Activated CD4-positive, alpha-beta memory T cell treated with anti-CD3 and anti-CD28 coated beads for 36 hours (primary cell): ENCODE measurements at regions of chr13 and their contacts with region 1.

Region 1: GRCh38 chr13:24512197-24512907 is at the start of gene PARP4:
- DNase-seq: peak; percentile 80
- H3K4me3 Mint-ChIP-seq: peak within 1 kb of the TSS; percentile 76
- H3K27ac Mint-ChIP-seq: peak within 1 kb of the TSS; percentile 94
- H3K4me1 Mint-ChIP-seq: peaks cover 28% of the 10 kb centered on the region
- H3K27me3 Mint-ChIP-seq: no peaks in the 10 kb centered on the region
- total RNA-seq, gene PARP4: 20.7 to 22.2 TPM

Region 2: DNA sequence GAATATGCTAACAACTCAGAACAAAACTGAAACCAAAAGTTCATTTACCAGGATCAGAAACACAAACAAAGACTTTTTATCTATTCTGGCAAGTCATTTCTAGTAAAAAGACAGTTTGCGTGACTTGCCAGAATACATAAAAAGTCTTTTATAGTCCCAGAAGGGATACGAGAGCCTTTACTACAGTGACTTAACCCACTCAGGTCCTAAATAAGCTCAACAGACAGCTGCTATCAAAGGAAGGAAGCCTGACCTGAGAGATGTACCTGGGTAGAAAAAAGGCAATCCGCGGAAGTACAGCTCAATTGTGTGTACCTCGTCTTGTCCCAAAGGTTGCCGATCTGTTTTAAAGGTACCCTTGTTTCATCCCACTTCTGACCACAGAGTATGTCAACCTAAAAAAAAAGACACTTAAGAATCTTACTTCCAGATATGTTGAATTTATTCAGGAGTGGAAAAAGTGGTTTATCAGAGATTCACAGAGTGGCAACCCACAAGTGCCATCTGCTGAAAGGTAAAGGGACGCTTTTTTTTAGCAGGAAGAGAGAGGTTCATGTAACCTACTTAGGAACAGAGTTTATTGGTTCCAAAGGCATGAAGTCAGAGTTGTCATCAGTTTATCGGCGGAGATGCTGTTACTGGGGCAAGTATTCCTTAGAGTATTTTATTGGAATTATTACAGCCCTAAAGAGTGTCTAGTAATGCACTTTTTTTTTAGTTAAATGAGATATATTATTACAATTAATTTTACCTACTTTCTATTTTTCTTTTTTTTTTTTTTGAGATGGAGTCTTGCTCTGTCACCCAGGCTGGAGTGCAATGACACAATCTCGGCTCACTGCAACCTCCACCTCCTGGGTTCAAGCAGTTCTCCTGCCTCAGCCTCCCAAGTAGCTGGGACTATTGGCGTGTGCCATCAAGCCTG is 545.4 kb before region 1 on chr13:
- CTCF ChIA-PET with region 1: no interaction called
- POLR2A ChIA-PET with region 1: no interaction called
- intact Hi-C with region 1: loop called (anchors 1 kb)
- DNase-seq: peak; percentile 31
- H3K4me3 Mint-ChIP-seq: peak overlapping the region; percentile 51
- H3K27ac Mint-ChIP-seq: peak overlapping the region; percentile 83
- H3K4me1 Mint-ChIP-seq: peaks cover 30% of the 10 kb centered on the region
- H3K27me3 Mint-ChIP-seq: no peaks in the 10 kb centered on the region

Region 3: GRCh38 chr13:24020375-24020830 is 491.9 kb before region 1 on chr13:
- CTCF ChIA-PET with region 1: no interaction called
- POLR2A ChIA-PET with region 1: no interaction called
- intact Hi-C with region 1: no loop called
- DNase-seq: peak; percentile 51
- H3K4me3 Mint-ChIP-seq: no peak overlapping the region
- H3K27ac Mint-ChIP-seq: no peak overlapping the region
- H3K4me1 Mint-ChIP-seq: peaks cover 3% of the 10 kb centered on the region
- H3K27me3 Mint-ChIP-seq: no peaks in the 10 kb centered on the region

Region 4: GRCh38 chr13:24254146-24254841 is 258.1 kb before region 1 on chr13:
- CTCF ChIA-PET with region 1: no interaction called
- POLR2A ChIA-PET with region 1: interaction called, 5 read pairs
- intact Hi-C with region 1: loop called (anchors 2 kb)
- DNase-seq: peak; percentile 86
- H3K4me3 Mint-ChIP-seq: peak overlapping the region; percentile 87
- H3K27ac Mint-ChIP-seq: peak overlapping the region; percentile 95
- H3K4me1 Mint-ChIP-seq: peaks cover 73% of the 10 kb centered on the region
- H3K27me3 Mint-ChIP-seq: no peaks in the 10 kb centered on the region

Region 5: DNA sequence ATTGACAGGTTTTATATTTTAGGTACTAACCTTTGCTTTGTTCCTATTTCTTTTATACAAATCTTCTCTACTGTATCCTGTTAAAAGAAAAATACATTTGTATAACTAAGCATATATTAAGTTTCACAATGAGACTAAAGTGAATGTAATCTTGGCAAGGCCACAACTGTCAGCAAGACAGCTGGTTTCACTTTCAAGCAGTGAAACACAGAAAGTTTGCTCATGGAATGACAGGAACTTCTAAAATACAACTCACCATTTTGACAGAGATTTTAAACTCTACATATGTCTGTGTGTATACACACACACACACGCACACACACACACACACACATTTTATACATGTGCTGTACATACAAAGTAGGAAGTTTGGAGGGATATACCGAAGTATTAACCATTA is 53.1 kb before region 1 on chr13:
- CTCF ChIA-PET with region 1: interaction called, 4 read pairs
- POLR2A ChIA-PET with region 1: no interaction called
- intact Hi-C with region 1: loop called (anchors 1 kb)
- DNase-seq: peak; percentile 31
- H3K4me3 Mint-ChIP-seq: no peak overlapping the region
- H3K27ac Mint-ChIP-seq: peak overlapping the region; percentile 2
- H3K4me1 Mint-ChIP-seq: peaks cover 20% of the 10 kb centered on the region
- H3K27me3 Mint-ChIP-seq: no peaks in the 10 kb centered on the region

Region 6: DNA sequence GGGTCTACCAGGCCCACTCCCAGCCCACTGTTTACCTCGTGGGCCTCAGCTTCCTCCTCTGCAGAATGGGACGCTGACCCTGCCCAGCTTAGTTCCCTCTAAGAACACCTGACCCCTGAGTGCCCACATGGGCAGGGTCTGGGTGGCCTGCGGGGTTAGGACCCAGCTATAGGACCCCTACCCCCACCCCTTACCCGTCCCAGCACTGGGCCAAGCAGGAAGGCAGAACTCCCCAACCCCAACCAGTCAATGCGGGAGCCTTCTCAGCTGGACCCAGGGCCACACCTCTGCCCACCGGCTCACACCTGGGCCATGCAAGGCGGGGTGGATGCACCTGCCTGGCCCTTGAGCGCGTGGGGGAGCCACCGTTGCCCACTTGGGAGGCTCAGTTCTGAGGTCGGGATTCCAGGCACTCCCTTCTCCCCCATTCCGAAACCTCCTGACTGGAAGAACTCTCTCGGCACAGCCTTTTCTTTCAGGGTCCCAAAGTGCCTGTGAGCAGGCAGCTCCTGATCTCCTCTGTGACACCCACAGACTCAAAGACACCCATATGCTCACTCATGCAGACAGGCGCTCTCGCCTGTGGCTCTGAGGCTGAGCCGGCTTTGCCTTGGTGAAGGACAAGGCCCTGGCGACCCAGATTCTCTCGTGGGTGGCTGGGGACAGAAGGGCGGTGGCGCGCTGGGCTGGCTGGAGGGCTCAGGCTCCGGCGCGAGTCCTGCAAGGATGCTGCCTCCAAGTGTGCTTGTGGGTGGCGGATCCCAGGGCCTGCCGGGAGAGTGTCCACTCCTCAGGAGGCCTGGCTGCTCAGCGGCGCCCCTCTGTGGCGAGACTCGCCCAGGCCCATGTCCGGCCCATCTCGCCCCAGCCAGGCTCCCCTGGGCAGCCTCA is 28.1 kb after region 1 on chr13:
- CTCF ChIA-PET with region 1: no interaction called
- POLR2A ChIA-PET with region 1: no interaction called
- intact Hi-C with region 1: no loop called
- DNase-seq: peak; percentile 22
- H3K4me3 Mint-ChIP-seq: no peak overlapping the region
- H3K27ac Mint-ChIP-seq: no peak overlapping the region
- H3K4me1 Mint-ChIP-seq: peaks cover 8% of the 10 kb centered on the region
- H3K27me3 Mint-ChIP-seq: peaks cover 33% of the 10 kb centered on the region

Region 7: DNA sequence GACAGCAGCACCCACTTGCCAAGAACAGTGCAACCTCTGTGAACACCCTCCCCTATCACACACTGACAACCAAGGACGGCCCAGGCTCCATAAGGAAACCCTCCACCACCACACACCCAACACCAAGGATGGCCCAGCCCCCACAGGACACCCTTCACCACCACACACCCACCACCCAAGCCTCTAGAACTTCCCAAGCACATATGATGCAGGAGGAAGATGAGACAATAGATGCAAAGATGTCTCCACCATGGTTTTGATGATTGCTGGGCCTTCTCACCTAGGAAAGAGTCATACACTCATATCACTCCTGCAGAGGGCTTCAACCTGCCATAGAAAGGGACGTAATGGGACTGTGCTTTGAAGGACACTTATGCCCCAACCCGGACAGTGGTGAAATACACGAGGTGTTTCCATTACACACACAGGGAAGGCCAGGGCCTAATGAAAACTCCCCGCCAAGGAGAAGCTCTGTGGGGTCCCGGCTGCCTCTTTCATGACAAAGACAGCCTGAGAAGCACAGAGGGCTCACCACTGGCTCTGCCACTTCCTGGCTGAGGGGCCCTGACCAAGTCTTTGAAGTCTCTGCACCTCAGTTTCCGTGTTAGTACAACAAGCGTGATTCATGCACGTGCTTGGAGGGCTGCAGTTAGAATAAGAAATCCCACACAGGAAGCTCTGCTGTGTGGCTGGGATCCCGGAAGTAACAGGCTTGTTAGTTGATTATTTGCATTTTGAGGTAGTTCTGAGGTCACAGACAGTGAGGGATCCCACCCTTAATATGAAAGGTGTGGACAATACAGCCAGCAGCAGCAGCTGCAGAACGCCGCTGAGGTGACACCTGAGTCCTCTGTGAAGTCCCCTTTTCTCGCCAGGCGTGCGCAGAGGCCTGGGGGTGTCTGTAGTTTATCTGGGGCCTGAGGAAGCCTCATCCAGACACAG is 105.9 kb after region 1 on chr13:
- CTCF ChIA-PET with region 1: no interaction called
- POLR2A ChIA-PET with region 1: no interaction called
- intact Hi-C with region 1: loop called (anchors 5 kb)
- DNase-seq: peak; percentile 87
- H3K4me3 Mint-ChIP-seq: peak overlapping the region; percentile 23
- H3K27ac Mint-ChIP-seq: peak overlapping the region; percentile 81
- H3K4me1 Mint-ChIP-seq: peaks cover 28% of the 10 kb centered on the region
- H3K27me3 Mint-ChIP-seq: no peaks in the 10 kb centered on the region

Region 8: DNA sequence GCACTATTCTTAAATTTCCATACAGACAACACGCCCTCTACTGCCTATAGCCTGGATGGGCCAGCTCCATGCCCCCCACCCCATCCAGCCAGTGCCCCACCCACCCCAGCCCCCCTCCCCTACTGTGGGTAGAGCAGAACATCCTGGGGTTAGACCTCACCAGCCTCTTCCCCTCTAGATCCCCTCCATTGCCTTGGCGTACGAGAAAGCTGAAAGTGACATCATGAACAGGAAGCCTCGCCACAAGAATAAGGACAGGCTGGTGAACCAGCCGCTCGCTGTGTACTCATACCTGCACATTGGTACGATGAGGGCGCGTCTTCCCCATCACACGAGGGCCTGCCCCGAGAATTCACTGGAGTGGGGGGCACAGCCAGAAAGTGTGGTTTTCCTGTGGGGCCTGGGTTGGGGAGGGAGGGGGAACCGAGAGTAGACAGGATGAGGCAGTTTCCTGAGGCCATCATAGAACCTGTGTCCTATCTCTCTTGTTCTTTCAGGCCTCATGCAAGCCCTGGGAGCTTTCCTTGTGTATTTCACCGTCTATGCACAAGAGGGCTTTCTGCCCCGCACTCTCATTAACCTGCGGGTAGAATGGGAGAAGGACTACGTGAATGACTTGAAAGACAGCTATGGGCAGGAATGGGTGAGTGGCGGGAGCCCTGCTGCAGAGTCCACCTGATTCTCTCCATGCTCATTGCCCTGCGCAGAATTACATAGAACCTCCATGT is 197.0 kb after region 1 on chr13:
- CTCF ChIA-PET with region 1: no interaction called
- POLR2A ChIA-PET with region 1: no interaction called
- intact Hi-C with region 1: loop called (anchors 5 kb)
- DNase-seq: peak; percentile 88
- H3K4me3 Mint-ChIP-seq: no peak overlapping the region
- H3K27ac Mint-ChIP-seq: peak overlapping the region; percentile 62
- H3K4me1 Mint-ChIP-seq: peaks cover 14% of the 10 kb centered on the region
- H3K27me3 Mint-ChIP-seq: peaks cover 1% of the 10 kb centered on the region

Region 9: GRCh38 chr13:24922745-24923591 is 410.6 kb after region 1 on chr13:
- CTCF ChIA-PET with region 1: no interaction called
- POLR2A ChIA-PET with region 1: no interaction called
- intact Hi-C with region 1: loop called (anchors 5 kb)
- DNase-seq: peak; percentile 96
- H3K4me3 Mint-ChIP-seq: peak overlapping the region; percentile 90
- H3K27ac Mint-ChIP-seq: peak overlapping the region; percentile 92
- H3K4me1 Mint-ChIP-seq: peaks cover 18% of the 10 kb centered on the region
- H3K27me3 Mint-ChIP-seq: no peaks in the 10 kb centered on the region